H1 (cell line): ENCODE measurements at regions of chr6 and their contacts with region 1.

Region 1: DNA sequence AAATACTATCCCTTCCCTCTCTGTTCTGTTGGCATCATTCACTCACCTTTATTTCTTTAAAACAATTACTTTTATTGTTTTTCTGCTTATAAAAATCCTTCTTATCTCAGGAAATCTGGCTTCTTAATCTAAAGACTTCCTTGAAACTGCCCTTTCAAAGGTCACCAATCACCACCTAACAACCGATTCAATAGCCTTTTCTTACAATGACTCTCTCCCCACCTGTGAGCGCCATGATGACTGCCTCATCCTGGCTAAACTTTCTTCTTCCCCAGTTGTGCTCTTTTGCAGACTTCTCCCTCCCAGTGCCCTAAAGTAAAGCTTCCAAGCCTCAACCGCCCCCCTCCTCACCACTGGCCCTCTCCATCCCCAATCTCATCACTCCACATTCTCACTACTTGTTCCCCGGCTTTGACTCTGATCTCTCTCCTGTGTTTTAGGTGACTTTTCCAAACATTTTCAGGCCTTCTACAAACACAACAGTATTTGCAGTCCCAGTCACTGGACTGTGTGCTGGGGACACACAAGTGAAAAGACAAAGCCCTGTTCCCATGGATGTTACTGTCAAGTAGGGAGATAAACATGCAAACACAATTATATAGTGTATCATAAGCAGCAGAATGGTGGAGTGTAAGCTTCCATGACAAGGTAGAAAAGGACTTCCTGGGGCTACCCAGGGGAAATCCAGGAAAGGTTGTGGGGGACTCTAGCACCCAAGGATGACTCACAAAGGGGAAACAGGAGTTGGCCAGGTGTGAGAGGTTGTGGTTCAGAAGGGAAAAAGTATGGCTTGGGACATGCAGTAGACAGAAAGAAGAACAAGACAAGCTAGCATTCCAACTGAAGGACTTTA is 12.8 kb downstream of the NHSL1 start:
- DNase-seq: peak in 1 of 2 experiments; percentile 38
- H3K4me3 ChIP-seq: no peak overlapping the region
- H3K27ac ChIP-seq: peak overlapping the region; percentile 66
- H3K4me1 ChIP-seq: peaks cover 0 to 24% (median 17%) of the 10 kb centered on the region in 4 experiments; a peak in 4 of 7 replicates
- H3K27me3 ChIP-seq: no peaks in the 10 kb centered on the region
- CTCF ChIP-seq: no peak
- EP300 ChIP-seq: no peak
- POLR2A ChIP-seq: no peak
- RAD21 ChIP-seq: no peak

Region 2: DNA sequence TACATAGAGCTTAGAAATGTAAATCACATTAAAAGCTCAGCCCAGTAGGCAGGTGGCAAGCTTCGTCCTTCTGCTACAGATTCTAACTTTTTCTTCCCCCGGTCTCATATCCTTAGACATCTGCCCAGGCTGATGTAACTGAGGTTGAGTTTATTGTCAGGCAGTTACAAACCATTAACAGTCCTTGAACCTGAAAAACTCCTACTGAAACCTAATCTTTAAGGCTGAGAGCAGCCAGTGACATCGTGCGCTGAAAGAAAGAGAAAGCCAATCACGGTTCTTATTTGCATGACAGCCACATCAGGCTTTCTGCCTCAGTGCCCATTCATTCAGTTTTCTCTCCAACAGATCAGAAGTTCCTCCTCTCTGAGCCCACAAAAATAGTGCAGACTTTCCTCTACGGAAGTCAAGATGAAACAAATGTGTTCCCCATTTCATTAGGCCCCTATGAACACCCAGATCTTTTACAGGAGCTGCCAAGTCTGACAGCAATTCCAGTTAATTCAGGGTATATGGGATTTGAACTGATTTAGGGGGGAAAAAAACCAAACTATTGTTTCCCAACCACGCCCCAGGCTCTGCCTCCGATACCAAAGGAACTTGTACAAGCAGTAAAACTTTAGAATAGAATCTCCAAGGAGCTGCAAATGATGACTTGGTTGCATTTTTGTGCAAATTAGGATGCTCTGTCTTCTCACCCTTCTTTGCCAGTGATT is 13.0 kb after region 1 on chr6 and contains the start of gene NHSL1:
- CTCF ChIA-PET with region 1: interaction called, 4 read pairs
- POLR2A ChIA-PET with region 1: interaction called, 20 read pairs
- DNase-seq: no peak
- H3K4me3 ChIP-seq: peak within 1 kb of the TSS; percentile 26 to 60 (median 45); a peak in 7 of 8 replicates
- H3K27ac ChIP-seq: peak within 1 kb of the TSS; percentile 56; the same call in 1 of the 2 replicates
- H3K4me1 ChIP-seq: peaks cover 5 to 21% (median 17%) of the 10 kb centered on the region in 4 experiments
- H3K27me3 ChIP-seq: no peaks in the 10 kb centered on the region
- CTCF ChIP-seq: no peak
- EP300 ChIP-seq: no peak
- POLR2A ChIP-seq: peak in 1 of 2 experiments; percentile 49; a peak in 1 of 3 replicates
- RAD21 ChIP-seq: no peak
- total RNA-seq, gene NHSL1: 27.2 and 32.4 TPM in 2 replicates